IMR-90 (cell line): ENCODE measurements at regions of chr14 and their contacts with region 1.

Region 1: DNA sequence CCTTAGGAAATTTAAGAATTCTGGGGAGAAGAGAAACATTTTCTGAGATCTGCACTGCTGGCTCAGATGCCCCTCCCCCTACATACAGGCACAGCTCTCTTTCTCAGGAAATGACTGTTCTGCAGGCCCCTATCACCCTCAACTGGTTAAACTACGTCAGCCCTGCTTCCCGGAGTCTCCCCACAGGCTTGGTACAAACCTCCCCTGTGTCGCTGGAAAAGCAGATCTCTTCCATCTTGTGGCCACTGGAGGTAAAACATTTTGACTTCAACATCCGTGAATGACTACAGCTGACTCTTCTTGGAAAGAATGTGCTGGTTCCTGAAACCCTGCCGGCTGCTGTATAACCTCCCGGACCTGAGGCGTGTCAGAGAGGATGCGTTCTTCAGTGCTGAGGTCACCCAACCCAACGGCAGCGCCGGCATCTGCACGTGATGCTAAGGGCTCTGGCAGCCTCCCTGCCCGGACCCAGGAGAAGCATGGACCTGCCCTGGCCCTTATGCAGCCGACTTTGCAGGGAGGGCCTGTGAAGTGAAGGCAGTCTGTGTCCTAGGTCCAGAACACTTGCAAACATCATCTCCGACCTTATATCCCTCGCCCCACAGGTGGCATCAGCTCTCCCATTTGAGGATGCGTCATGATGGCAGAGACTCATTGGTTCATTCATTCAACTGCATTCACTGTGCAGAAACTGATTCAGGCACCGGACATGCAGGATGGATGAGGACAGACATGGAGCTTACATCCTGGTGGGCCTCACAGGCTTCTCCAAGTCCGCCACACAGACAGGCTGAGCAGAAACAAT is 129.3 kb downstream of the GCH1 start:
- DNase-seq: peak; percentile 100
- ATAC-seq: peak; percentile 88
- H3K4me3 ChIP-seq: no peak overlapping the region
- H3K27ac ChIP-seq: peak overlapping the region; percentile 85
- H3K4me1 ChIP-seq: peaks cover 32% of the 10 kb centered on the region
- H3K27me3 ChIP-seq: no peaks in the 10 kb centered on the region
- CTCF ChIP-seq: peak; percentile 92
- POLR2A ChIP-seq: peak; percentile 63
- RAD21 ChIP-seq: peak; percentile 87

Region 2: GRCh38 chr14:54503476-54504257 is 269.7 kb before region 1 on chr14:
- CTCF ChIA-PET with region 1: interaction called, 3 read pairs
- POLR2A ChIA-PET with region 1: no interaction called
- dilution Hi-C with region 1: no loop called
- in situ Hi-C with region 1: no loop called
- intact Hi-C with region 1: loop called (anchors 2 kb)
- DNase-seq: peak; percentile 47
- ATAC-seq: peak; percentile 82
- H3K4me3 ChIP-seq: no peak overlapping the region
- H3K27ac ChIP-seq: no peak overlapping the region
- H3K4me1 ChIP-seq: peaks cover 1% of the 10 kb centered on the region; the same call in 1 of the 2 replicates
- H3K27me3 ChIP-seq: peaks cover 3% of the 10 kb centered on the region
- CTCF ChIP-seq: peak; percentile 52
- POLR2A ChIP-seq: no peak
- RAD21 ChIP-seq: peak; percentile 55

Region 3: GRCh38 chr14:54627540-54628363 is 145.6 kb before region 1 on chr14:
- CTCF ChIA-PET with region 1: interaction called, 4 read pairs
- POLR2A ChIA-PET with region 1: no interaction called
- dilution Hi-C with region 1: no loop called
- in situ Hi-C with region 1: no loop called
- intact Hi-C with region 1: loop called (anchors 5 kb)
- DNase-seq: peak; percentile 69
- ATAC-seq: peak; percentile 51
- H3K4me3 ChIP-seq: no peak overlapping the region
- H3K27ac ChIP-seq: peak overlapping the region; percentile 97
- H3K4me1 ChIP-seq: peaks cover 26% of the 10 kb centered on the region
- H3K27me3 ChIP-seq: no peaks in the 10 kb centered on the region
- CTCF ChIP-seq: no peak
- POLR2A ChIP-seq: no peak
- RAD21 ChIP-seq: no peak

Region 4: GRCh38 chr14:54652188-54652587 is 121.2 kb before region 1 on chr14:
- CTCF ChIA-PET with region 1: interaction called, 3 read pairs
- POLR2A ChIA-PET with region 1: no interaction called
- dilution Hi-C with region 1: no loop called
- in situ Hi-C with region 1: no loop called
- intact Hi-C with region 1: loop called (anchors 1 kb)
- DNase-seq: peak; percentile 100
- ATAC-seq: peak; percentile 88
- H3K4me3 ChIP-seq: no peak overlapping the region
- H3K27ac ChIP-seq: peak overlapping the region; percentile 64; the same call in 1 of the 2 replicates
- H3K4me1 ChIP-seq: peaks cover 41% of the 10 kb centered on the region
- H3K27me3 ChIP-seq: no peaks in the 10 kb centered on the region
- CTCF ChIP-seq: no peak
- POLR2A ChIP-seq: no peak
- RAD21 ChIP-seq: no peak; the same call in 1 of the 2 replicates

Region 5: DNA sequence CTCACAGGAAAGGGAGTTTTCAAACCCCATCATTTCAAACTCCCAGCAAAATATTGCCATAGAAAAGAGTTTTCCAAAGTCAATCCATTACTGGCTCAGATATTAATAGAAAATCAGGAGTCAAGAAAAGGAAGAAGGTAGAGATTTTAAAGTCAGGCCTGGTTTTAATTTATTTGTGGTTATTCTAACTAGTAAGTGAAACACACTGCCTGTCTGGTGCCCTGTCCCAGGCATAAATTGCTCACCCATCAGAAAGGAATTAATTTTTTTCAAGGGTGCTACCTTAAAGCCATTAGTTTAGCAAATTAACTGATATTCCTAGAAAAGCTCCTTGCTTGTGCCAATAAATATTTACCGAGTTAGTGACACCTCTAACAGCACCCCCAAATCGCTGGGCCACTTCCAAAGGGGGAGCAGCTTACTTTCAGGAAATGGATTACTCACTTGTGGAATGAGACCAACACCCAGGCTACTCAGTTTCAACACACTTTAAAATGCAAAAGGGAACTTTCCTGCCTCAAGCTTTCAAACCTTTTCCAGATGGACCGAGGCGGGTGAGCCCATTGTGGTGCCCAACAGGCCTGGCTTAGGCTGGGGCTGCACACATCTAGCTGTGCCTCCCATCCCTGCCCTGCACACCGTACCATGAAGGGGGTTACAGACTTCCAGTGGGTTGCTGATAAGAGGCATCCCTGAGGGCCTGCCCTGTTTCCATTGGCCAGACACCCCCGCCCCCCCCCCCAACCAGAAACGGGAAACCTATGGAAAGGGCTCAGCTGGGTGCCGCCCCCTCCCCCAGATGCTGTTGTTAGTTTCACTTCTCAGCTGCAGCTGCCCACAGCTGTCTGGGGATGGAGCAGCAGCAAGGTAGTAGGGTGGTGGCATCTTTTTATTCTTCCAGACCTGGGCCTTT is 89.2 kb before region 1 on chr14:
- CTCF ChIA-PET with region 1: interaction called, 6 read pairs
- POLR2A ChIA-PET with region 1: interaction called, 3 read pairs
- dilution Hi-C with region 1: no loop called
- in situ Hi-C with region 1: loop called (anchors 5 kb)
- intact Hi-C with region 1: loop called (anchors 2 kb)
- DNase-seq: peak; percentile 80
- ATAC-seq: peak; percentile 57
- H3K4me3 ChIP-seq: no peak overlapping the region
- H3K27ac ChIP-seq: peak overlapping the region; percentile 96
- H3K4me1 ChIP-seq: peaks cover 47% of the 10 kb centered on the region
- H3K27me3 ChIP-seq: no peaks in the 10 kb centered on the region
- CTCF ChIP-seq: no peak
- POLR2A ChIP-seq: no peak
- RAD21 ChIP-seq: no peak

Region 6: GRCh38 chr14:54762296-54762695 is 11.1 kb before region 1 on chr14:
- CTCF ChIA-PET with region 1: no interaction called
- POLR2A ChIA-PET with region 1: no interaction called
- dilution Hi-C with region 1: no loop called
- in situ Hi-C with region 1: no loop called
- intact Hi-C with region 1: no loop called
- DNase-seq: peak; percentile 49
- ATAC-seq: no peak; the same call in 1 of the 2 replicates
- H3K4me3 ChIP-seq: no peak overlapping the region
- H3K27ac ChIP-seq: no peak overlapping the region
- H3K4me1 ChIP-seq: peaks cover 9% of the 10 kb centered on the region
- H3K27me3 ChIP-seq: no peaks in the 10 kb centered on the region
- CTCF ChIP-seq: no peak
- POLR2A ChIP-seq: no peak
- RAD21 ChIP-seq: no peak